ENCODE measurements at regions of chr12 and their contacts with region 1.

Region 1: DNA sequence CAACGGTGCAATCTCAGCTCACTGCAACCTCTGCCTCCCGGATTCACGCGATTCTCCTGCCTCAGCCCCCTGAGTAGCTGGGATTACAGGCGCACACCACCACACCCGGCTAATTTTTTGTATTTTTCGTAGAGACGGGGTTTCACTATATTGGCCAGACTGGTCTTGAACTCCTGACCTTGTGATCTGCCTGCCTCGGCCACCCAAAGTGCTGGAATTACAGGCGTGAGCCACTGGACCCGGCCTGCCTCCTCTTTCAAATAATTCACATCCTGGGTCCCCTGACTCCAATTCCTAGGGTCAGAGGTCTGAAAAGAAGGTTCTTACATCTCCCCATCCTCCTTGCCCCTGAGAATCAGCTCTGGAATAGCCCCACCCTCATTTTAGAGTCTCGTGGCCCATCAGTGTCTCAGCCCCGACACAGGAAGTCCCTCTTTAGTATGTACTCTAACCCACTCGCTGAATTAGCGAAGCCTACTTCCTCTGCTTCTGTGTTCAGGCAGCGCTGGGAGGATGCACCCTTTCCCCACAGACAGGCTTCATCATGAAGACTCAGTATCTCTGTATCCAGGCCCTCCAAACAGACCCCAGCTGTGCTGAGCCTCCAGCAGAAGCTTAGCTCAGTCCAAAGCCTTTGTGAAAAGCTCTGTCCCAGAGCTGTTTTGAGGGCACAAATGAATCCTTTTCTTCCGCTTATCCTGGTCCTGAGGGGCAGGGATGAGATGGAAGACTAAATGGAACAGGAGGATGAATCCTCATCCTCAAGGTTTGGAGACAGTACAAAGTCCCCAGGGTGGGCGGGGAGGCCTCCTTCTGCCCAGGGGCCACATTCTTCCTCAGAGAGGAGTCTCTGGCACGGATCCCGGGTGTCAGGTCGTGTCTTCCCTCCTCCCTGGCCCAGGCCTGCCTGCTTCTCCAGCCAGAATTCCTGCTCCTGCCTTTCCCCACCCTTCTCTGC is 3.5 kb downstream of the LPAR5 start:
- DNase-seq: peak; percentile 52 to 66 (median 62)
- H3K4me3 ChIP-seq: no peak overlapping the region
- H3K4me3 Mint-ChIP-seq: peak overlapping the region; percentile 82 to 93 (median 88)
- H3K27ac ChIP-seq: peak overlapping the region; percentile 63
- H3K27ac Mint-ChIP-seq: peak overlapping the region; percentile 91 to 98 (median 97)
- H3K4me1 ChIP-seq: peaks cover 50% of the 10 kb centered on the region
- H3K4me1 Mint-ChIP-seq: peaks cover 35 to 70% (median 52%) of the 10 kb centered on the region in 4 donors
- H3K27me3 ChIP-seq: no peaks in the 10 kb centered on the region
- H3K27me3 Mint-ChIP-seq: no peaks in the 10 kb centered on the region

Region 2: DNA sequence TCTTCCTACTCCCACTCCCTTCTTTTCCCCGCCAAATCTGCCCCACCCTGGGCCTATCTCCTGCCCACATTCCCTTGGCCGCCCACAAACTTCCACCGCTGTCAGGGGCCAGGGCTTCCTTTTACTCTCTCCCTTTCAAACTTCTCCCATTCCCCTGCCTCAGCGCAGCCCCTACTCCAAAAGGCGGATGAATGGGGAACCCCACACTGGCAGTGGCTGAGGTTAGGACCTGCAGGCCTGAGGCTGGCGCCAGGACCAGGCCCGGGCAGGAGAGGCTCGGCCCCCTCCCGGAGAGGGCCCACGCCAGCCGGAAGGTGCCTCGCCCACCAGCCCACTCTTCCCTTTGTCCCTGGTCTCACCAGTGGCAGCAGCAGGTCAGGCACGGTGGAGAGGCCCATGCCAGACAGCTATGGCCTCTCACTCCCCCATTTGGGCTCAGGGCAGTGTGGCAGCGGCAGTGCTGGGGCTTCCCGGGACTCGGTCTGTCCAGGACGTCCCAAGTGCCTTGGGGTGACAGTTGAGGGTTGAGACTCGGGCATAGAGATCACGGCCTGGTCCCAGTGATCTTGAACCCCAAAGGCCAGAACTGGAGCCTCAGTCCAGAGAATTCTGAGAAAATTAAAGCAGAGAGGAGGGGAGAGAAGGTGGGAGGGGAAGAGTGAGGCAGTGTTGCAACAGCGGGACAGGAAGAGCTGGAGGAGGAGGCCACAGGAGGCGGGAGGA is 290.7 kb before region 1 on chr12 and contains the start of gene TNFRSF1A:
- CTCF ChIA-PET with region 1: no interaction called
- POLR2A ChIA-PET with region 1: no interaction called
- intact Hi-C with region 1: no loop called
- DNase-seq: peak; percentile 44 to 66 (median 56)
- H3K4me3 ChIP-seq: peak within 1 kb of the TSS; percentile 87 to 97
- H3K4me3 Mint-ChIP-seq: no peak within 1 kb of the TSS
- H3K27ac ChIP-seq: peak within 1 kb of the TSS; percentile 92
- H3K27ac Mint-ChIP-seq: peak within 1 kb of the TSS in 2 of 7 donors; percentile 87 to 97
- H3K4me1 ChIP-seq: peaks cover 74% of the 10 kb centered on the region
- H3K4me1 Mint-ChIP-seq: peaks cover 28 to 40% (median 35%) of the 10 kb centered on the region in 4 donors
- H3K27me3 ChIP-seq: no peaks in the 10 kb centered on the region
- H3K27me3 Mint-ChIP-seq: no peaks in the 10 kb centered on the region
- total RNA-seq, gene TNFRSF1A: 80.7 to 86.7 TPM

Region 3: DNA sequence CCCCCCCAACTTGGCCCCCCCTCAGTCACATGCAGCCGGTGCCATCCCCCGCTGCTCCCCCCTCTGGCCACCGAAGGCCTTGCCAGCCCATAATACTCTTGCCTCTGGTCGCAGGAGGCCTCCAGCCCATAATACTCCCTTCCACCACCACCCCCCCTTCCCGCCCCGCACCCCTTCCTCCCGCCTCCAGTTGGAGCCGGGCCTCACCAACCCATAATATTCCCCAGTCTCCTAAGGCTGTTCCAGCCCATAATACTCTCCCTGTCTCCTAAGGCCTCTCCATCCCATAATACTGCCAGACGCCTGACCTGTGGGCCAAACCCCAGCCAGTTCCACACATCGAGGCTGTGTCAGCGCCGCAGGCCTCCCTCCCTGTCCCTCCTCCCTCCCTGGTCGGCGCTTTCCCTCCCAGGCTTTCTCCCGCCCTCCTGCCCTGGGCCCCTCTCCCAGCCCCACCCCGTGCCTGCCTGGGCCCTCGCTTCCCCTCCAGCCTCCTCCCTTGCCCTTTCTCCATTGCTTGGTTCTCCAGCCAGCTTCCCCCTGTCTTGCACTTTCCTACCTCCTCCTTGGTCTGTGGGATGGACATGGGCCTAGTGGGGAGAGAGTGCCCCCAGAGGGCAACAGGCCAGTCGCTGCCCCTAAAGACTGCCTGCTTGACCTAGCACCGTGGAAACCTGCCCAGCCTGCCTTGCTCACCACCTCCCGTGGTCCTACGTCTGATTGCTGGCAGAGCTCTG is 18.4 kb before region 1 on chr12:
- CTCF ChIA-PET with region 1: interaction called, 40 read pairs
- POLR2A ChIA-PET with region 1: interaction called, 10 read pairs
- intact Hi-C with region 1: no loop called
- DNase-seq: peak in 4 of 5 donors; percentile 42 to 60 (median 53)
- H3K4me3 ChIP-seq: no peak overlapping the region
- H3K4me3 Mint-ChIP-seq: peak overlapping the region in 1 of 8 donors; percentile 67
- H3K27ac ChIP-seq: no peak overlapping the region
- H3K27ac Mint-ChIP-seq: peak overlapping the region; percentile 26 to 93 (median 85)
- H3K4me1 ChIP-seq: peaks cover 31% of the 10 kb centered on the region
- H3K4me1 Mint-ChIP-seq: peaks cover 23 to 50% (median 34%) of the 10 kb centered on the region in 4 donors
- H3K27me3 ChIP-seq: no peaks in the 10 kb centered on the region
- H3K27me3 Mint-ChIP-seq: no peaks in the 10 kb centered on the region

Region 4: DNA sequence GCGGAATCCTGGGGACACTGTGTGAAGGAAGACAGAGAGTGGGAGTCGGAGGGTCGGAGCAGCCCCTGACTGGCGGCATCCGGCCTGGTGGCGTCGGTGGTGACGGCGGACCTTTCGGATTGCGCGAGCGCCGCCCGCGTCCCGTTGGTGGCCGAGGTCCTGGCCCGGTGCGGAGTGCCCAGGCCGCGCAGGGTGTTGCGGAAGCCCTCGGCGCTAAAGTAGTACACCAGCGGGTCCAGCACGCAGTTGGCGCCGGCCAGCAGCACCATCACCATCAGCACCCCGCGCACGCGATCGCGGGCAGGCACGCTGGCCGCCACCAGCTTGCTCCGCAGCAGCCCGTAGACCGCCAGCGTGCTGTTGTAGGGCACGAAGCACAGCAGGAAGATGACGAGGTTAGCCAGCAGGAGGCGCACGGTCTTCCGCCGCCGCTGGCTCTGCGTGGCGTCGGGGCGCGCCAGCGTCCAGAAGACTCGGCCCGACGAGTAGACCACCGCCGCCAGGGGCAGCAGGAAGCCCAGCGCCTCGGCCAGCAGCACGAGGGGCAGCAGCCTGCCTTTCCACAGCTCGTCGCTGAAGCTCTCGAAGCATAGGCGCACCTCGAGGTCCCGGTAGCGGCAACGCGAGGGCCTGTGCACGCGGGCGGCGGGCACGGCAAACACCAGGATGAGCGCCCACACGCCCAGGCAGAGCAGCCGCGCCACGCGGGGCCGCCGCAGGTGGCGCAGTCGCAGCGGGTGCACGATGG is 12.0 kb before region 1 on chr12:
- CTCF ChIA-PET with region 1: interaction called, 40 read pairs
- POLR2A ChIA-PET with region 1: interaction called, 5 read pairs
- intact Hi-C with region 1: no loop called
- DNase-seq: peak in 2 of 5 donors; percentile 36 to 49
- H3K4me3 ChIP-seq: peak overlapping the region in 1 of 2 donors; percentile 28
- H3K4me3 Mint-ChIP-seq: peak overlapping the region in 3 of 8 donors; percentile 54 to 78 (median 59)
- H3K27ac ChIP-seq: no peak overlapping the region
- H3K27ac Mint-ChIP-seq: peak overlapping the region in 1 of 7 donors; percentile 36
- H3K4me1 ChIP-seq: no peaks in the 10 kb centered on the region
- H3K4me1 Mint-ChIP-seq: peaks cover 3 to 24% (median 7%) of the 10 kb centered on the region in 4 donors
- H3K27me3 ChIP-seq: no peaks in the 10 kb centered on the region
- H3K27me3 Mint-ChIP-seq: no peaks in the 10 kb centered on the region